Naive thymus-derived CD4-positive, alpha-beta T cell (primary cell): ENCODE measurements at regions of chr7 and their contacts with region 1.

Region 1: GRCh38 chr7:158829342-158830210 is at the start of gene ESYT2:
- DNase-seq: peak; percentile 98 to 100 (median 100)
- ATAC-seq: peak; percentile 88
- H3K4me3 ChIP-seq: peak within 1 kb of the TSS; percentile 67
- H3K4me3 Mint-ChIP-seq: peak within 1 kb of the TSS; percentile 81 to 100 (median 91)
- H3K27ac ChIP-seq: peak within 1 kb of the TSS; percentile 97
- H3K27ac Mint-ChIP-seq: peak within 1 kb of the TSS; percentile 88 to 99 (median 95)
- H3K4me1 ChIP-seq: peaks cover 15 to 23% of the 10 kb centered on the region in 2 donors
- H3K4me1 Mint-ChIP-seq: peaks cover 17 to 46% (median 35%) of the 10 kb centered on the region in 7 donors
- H3K27me3 ChIP-seq: no peaks in the 10 kb centered on the region
- H3K27me3 Mint-ChIP-seq: peaks cover 0 to 11% (median 0%) of the 10 kb centered on the region in 5 donors
- total RNA-seq, gene ESYT2: 103 to 129 (median 113) TPM

Region 2: GRCh38 chr7:158760936-158761335 is 68.6 kb before region 1 on chr7:
- CTCF ChIA-PET with region 1: interaction called, 4 read pairs
- POLR2A ChIA-PET with region 1: interaction called, 5 read pairs
- intact Hi-C with region 1: loop called in 1 of 2 experiments (anchors 1 kb)
- DNase-seq: peak in 5 of 9 donors; percentile 32 to 52 (median 45)
- ATAC-seq: peak; percentile 57
- H3K4me3 ChIP-seq: no peak overlapping the region
- H3K4me3 Mint-ChIP-seq: no peak overlapping the region
- H3K27ac ChIP-seq: no peak overlapping the region
- H3K27ac Mint-ChIP-seq: peak overlapping the region in 8 of 9 donors; percentile 22 to 87 (median 53)
- H3K4me1 ChIP-seq: no peaks in the 10 kb centered on the region
- H3K4me1 Mint-ChIP-seq: peaks cover 0 to 28% (median 6%) of the 10 kb centered on the region in 7 donors
- H3K27me3 ChIP-seq: no peaks in the 10 kb centered on the region
- H3K27me3 Mint-ChIP-seq: no peaks in the 10 kb centered on the region

Region 3: GRCh38 chr7:158782761-158783401 is 46.7 kb before region 1 on chr7:
- CTCF ChIA-PET with region 1: interaction called, 4 read pairs
- POLR2A ChIA-PET with region 1: interaction called, 15 read pairs
- intact Hi-C with region 1: loop called (anchors 1 to 2 kb)
- DNase-seq: no peak
- ATAC-seq: peak; percentile 49
- H3K4me3 ChIP-seq: no peak overlapping the region
- H3K4me3 Mint-ChIP-seq: no peak overlapping the region
- H3K27ac ChIP-seq: peak overlapping the region; percentile 34
- H3K27ac Mint-ChIP-seq: no peak overlapping the region
- H3K4me1 ChIP-seq: peaks cover 7 to 41% of the 10 kb centered on the region in 2 donors
- H3K4me1 Mint-ChIP-seq: peaks cover 4 to 14% (median 8%) of the 10 kb centered on the region in 7 donors
- H3K27me3 ChIP-seq: no peaks in the 10 kb centered on the region
- H3K27me3 Mint-ChIP-seq: no peaks in the 10 kb centered on the region

Region 4: GRCh38 chr7:158818325-158819213 is 11.0 kb before region 1 on chr7:
- CTCF ChIA-PET with region 1: interaction called, 26 read pairs
- POLR2A ChIA-PET with region 1: interaction called, 67 read pairs
- intact Hi-C with region 1: loop called (anchors 1 kb)
- DNase-seq: peak; percentile 59 to 90 (median 83)
- ATAC-seq: peak; percentile 85
- H3K4me3 ChIP-seq: peak overlapping the region; percentile 59
- H3K4me3 Mint-ChIP-seq: peak overlapping the region; percentile 82 to 94 (median 87)
- H3K27ac ChIP-seq: peak overlapping the region; percentile 94
- H3K27ac Mint-ChIP-seq: peak overlapping the region; percentile 96 to 99 (median 98)
- H3K4me1 ChIP-seq: peaks cover 73 to 87% of the 10 kb centered on the region in 2 donors
- H3K4me1 Mint-ChIP-seq: peaks cover 75 to 97% (median 85%) of the 10 kb centered on the region in 7 donors
- H3K27me3 ChIP-seq: no peaks in the 10 kb centered on the region
- H3K27me3 Mint-ChIP-seq: no peaks in the 10 kb centered on the region

Region 5: GRCh38 chr7:158856883-158857668 is 27.5 kb after region 1 on chr7:
- CTCF ChIA-PET with region 1: no interaction called
- POLR2A ChIA-PET with region 1: interaction called, 10 read pairs
- intact Hi-C with region 1: loop called (anchors 1 kb)
- DNase-seq: peak in 2 of 9 donors; percentile 15 to 17
- ATAC-seq: no peak
- H3K4me3 ChIP-seq: peak overlapping the region; percentile 77
- H3K4me3 Mint-ChIP-seq: peak overlapping the region; percentile 67 to 98 (median 94)
- H3K27ac ChIP-seq: peak overlapping the region; percentile 83
- H3K27ac Mint-ChIP-seq: peak overlapping the region in 8 of 9 donors; percentile 24 to 92 (median 84)
- H3K4me1 ChIP-seq: peaks cover 0 to 22% of the 10 kb centered on the region in 2 donors
- H3K4me1 Mint-ChIP-seq: peaks cover 15 to 46% (median 39%) of the 10 kb centered on the region in 7 donors
- H3K27me3 ChIP-seq: no peaks in the 10 kb centered on the region
- H3K27me3 Mint-ChIP-seq: peaks cover 0 to 4% (median 0%) of the 10 kb centered on the region in 5 donors